ENCODE measurements at regions of chr7 and their contacts with region 1.

Region 1: GRCh38 chr7:51444936-51445335 is 128.3 kb upstream of the COBL start:
- DNase-seq: no peak
- ATAC-seq: no peak
- H3K4me3 ChIP-seq: no peak overlapping the region
- H3K27ac ChIP-seq: no peak overlapping the region
- H3K4me1 ChIP-seq: no peaks in the 10 kb centered on the region
- H3K27me3 ChIP-seq: peaks cover 0 to 19% (median 0%) of the 10 kb centered on the region in 9 donors
- CTCF ChIP-seq: no peak
- POLR2A ChIP-seq: no peak

Region 2: GRCh38 chr7:51501620-51502019 is 56.7 kb after region 1 on chr7:
- intact Hi-C with region 1: loop called in 1 of 10 experiments (anchors 10 kb)
- DNase-seq: no peak
- ATAC-seq: no peak
- H3K4me3 ChIP-seq: no peak overlapping the region
- H3K27ac ChIP-seq: no peak overlapping the region
- H3K4me1 ChIP-seq: no peaks in the 10 kb centered on the region
- H3K27me3 ChIP-seq: no peaks in the 10 kb centered on the region
- CTCF ChIP-seq: no peak
- POLR2A ChIP-seq: no peak